IMR-90 (cell line): ENCODE measurements at regions of chr15 and their contacts with region 1.

Region 1: DNA sequence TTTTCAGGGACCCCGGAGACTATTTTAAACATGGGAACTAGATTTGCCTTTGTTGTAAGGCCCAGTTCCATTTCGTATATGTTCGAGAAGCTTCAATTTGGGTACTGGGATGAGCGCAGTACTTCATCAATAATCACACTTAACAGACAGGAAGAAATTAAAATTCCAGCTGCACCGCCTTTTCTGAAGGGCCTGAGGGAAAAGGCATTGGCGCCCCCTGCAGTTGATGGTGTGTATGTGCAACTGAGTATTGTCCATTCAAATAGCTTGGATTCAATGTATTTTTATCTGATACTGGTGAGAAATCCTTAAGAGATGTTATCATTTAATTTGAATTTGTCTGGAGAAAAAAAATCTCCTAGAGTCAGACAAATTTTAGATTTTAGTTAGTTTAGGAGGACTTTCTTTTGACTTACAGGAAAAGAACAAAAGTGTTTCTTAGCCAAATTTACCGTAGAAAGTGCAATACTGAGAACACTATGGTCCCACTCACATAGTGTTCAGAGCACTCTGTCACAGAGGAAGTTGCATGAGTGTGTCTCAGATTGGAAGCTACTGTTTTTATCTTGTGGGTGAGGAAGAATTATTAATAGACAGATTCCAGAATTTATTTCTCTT is 5.4 kb upstream of the ALDH1A2 start:
- DNase-seq: peak; percentile 43
- ATAC-seq: peak; percentile 57
- H3K4me3 ChIP-seq: no peak overlapping the region
- H3K27ac ChIP-seq: no peak overlapping the region
- H3K4me1 ChIP-seq: 0 out of 2 replicates have a peak, but pooled peaks cover 1% of the 10 kb centered on the region
- H3K27me3 ChIP-seq: peaks cover 29% of the 10 kb centered on the region
- CTCF ChIP-seq: peak; percentile 77
- POLR2A ChIP-seq: no peak
- RAD21 ChIP-seq: peak; percentile 65

Region 2: GRCh38 chr15:57561041-57561711 is 509.7 kb before region 1 on chr15:
- CTCF ChIA-PET with region 1: interaction called, 4 read pairs
- POLR2A ChIA-PET with region 1: no interaction called
- dilution Hi-C with region 1: no loop called
- in situ Hi-C with region 1: no loop called
- intact Hi-C with region 1: loop called (anchors 10 kb)
- DNase-seq: peak; percentile 65
- ATAC-seq: peak; percentile 100
- H3K4me3 ChIP-seq: no peak overlapping the region
- H3K27ac ChIP-seq: no peak overlapping the region
- H3K4me1 ChIP-seq: no peaks in the 10 kb centered on the region
- H3K27me3 ChIP-seq: peaks cover 18% of the 10 kb centered on the region
- CTCF ChIP-seq: peak; percentile 81
- POLR2A ChIP-seq: no peak
- RAD21 ChIP-seq: peak; percentile 68

Region 3: DNA sequence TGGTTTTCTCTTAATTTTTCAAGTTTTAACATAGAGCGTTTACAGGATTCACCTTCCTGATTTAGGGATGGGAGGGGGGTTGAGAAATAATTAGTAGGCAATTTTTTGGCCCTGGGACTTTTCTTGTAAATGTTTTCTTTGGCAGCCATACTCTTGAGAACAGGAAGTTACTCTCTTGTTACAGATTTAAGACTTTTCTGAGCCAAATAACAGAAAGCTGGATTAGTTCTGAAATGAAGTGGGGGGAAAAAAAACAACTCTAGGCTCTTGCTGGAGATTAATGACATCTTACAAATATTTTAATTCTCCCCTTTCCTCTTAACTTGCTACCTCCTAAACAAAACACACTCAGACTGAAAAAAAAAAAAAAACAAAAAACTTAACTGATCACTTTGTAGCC is 378.2 kb before region 1 on chr15:
- CTCF ChIA-PET with region 1: no interaction called
- POLR2A ChIA-PET with region 1: no interaction called
- dilution Hi-C with region 1: no loop called
- in situ Hi-C with region 1: no loop called
- intact Hi-C with region 1: no loop called
- DNase-seq: peak; percentile 12
- ATAC-seq: no peak
- H3K4me3 ChIP-seq: no peak overlapping the region
- H3K27ac ChIP-seq: no peak overlapping the region
- H3K4me1 ChIP-seq: no peaks in the 10 kb centered on the region
- H3K27me3 ChIP-seq: no peaks in the 10 kb centered on the region; the same call in 1 of the 2 replicates
- CTCF ChIP-seq: no peak
- POLR2A ChIP-seq: no peak
- RAD21 ChIP-seq: no peak

Region 4: GRCh38 chr15:57751177-57751800 is 319.6 kb before region 1 on chr15:
- CTCF ChIA-PET with region 1: interaction called, 5 read pairs
- POLR2A ChIA-PET with region 1: no interaction called
- dilution Hi-C with region 1: no loop called
- in situ Hi-C with region 1: no loop called
- intact Hi-C with region 1: loop called (anchors 5 kb)
- DNase-seq: peak; percentile 40
- ATAC-seq: peak; percentile 73
- H3K4me3 ChIP-seq: no peak overlapping the region
- H3K27ac ChIP-seq: no peak overlapping the region
- H3K4me1 ChIP-seq: no peaks in the 10 kb centered on the region
- H3K27me3 ChIP-seq: no peaks in the 10 kb centered on the region; the same call in 1 of the 2 replicates
- CTCF ChIP-seq: peak; percentile 51
- POLR2A ChIP-seq: no peak
- RAD21 ChIP-seq: peak; percentile 55

Region 5: DNA sequence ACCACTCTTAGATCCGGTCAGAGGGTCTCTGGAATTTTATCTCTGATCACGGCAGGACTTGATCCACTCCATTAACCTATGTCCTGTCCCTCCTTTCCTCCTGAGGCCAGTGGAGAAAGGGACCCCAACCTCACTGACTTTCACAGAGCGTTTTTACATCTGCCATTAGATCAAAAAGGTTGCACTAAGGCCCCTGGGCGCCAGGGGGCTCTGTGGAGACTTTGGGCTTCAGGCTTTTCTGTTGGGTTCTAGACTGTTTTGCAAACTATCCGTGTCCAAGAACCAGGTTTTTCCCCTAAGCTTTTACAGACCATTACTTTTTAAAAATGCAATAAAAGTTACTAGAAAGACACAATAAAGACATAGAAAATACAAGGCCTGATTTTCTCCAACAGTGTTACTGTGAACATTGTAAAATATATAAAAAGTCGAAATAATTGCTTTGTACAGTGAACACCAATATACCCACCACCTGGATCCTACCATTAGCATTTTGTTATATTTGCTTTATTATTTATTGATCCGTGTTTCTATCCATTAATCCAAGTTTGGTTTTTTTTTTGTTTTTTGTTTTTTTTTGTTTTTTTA is 204.7 kb before region 1 on chr15:
- CTCF ChIA-PET with region 1: interaction called, 10 read pairs
- POLR2A ChIA-PET with region 1: no interaction called
- dilution Hi-C with region 1: no loop called
- in situ Hi-C with region 1: no loop called
- intact Hi-C with region 1: loop called (anchors 2 kb)
- DNase-seq: peak; percentile 15
- ATAC-seq: peak; percentile 68; the same call in 1 of the 2 replicates
- H3K4me3 ChIP-seq: no peak overlapping the region
- H3K27ac ChIP-seq: no peak overlapping the region
- H3K4me1 ChIP-seq: no peaks in the 10 kb centered on the region
- H3K27me3 ChIP-seq: no peaks in the 10 kb centered on the region
- CTCF ChIP-seq: peak; percentile 63
- POLR2A ChIP-seq: no peak
- RAD21 ChIP-seq: peak; percentile 45

Region 6: DNA sequence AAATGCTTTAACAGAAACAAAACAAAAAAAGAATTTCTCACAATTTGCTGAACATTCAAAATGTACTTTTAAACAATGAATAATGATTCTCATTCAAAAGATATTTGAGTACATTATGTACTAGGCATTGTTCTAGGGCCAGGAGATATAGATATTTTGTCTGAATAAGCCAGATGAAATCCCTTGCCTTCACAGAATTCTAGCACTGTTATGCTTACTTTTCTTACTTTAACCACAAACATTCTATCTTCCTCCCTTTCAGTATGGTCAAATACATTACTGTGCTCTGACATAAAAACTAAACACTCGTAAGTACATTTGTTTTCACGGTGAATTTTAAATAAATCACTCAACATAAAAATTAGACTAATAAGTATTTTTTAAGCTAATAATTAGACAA is 561.9 kb after region 1 on chr15:
- CTCF ChIA-PET with region 1: no interaction called
- POLR2A ChIA-PET with region 1: no interaction called
- dilution Hi-C with region 1: no loop called
- in situ Hi-C with region 1: no loop called
- intact Hi-C with region 1: no loop called
- DNase-seq: peak; percentile 46
- ATAC-seq: 0 out of 2 replicates have a peak, but pooled peaks have one; percentile 51
- H3K4me3 ChIP-seq: no peak overlapping the region
- H3K27ac ChIP-seq: no peak overlapping the region
- H3K4me1 ChIP-seq: 0 out of 2 replicates have a peak, but pooled peaks cover 1% of the 10 kb centered on the region
- H3K27me3 ChIP-seq: no peaks in the 10 kb centered on the region
- CTCF ChIP-seq: no peak
- POLR2A ChIP-seq: no peak
- RAD21 ChIP-seq: no peak